B cell (primary cell): ENCODE measurements at regions of chr16 and their contacts with region 1.

Region 1: GRCh38 chr16:57530104-57530521 is 6.3 kb downstream of the CCDC102A start:
- DNase-seq: peak; percentile 75
- ATAC-seq: peak; percentile 72
- H3K4me3 ChIP-seq: peak overlapping the region in 4 of 5 experiments; percentile 4 to 20 (median 10)
- H3K4me3 Mint-ChIP-seq: peak overlapping the region; percentile 86
- H3K27ac ChIP-seq: peak overlapping the region; percentile 73 to 83
- H3K27ac Mint-ChIP-seq: peak overlapping the region; percentile 97
- H3K4me1 ChIP-seq: peaks cover 61 to 66% of the 10 kb centered on the region in 2 donors
- H3K4me1 Mint-ChIP-seq: peaks cover 68% of the 10 kb centered on the region
- H3K27me3 ChIP-seq: no peaks in the 10 kb centered on the region
- H3K27me3 Mint-ChIP-seq: no peaks in the 10 kb centered on the region
- CTCF ChIP-seq: no peak

Region 2: GRCh38 chr16:56115817-56116576 is 1414.1 kb before region 1 on chr16:
- CTCF ChIA-PET with region 1: no interaction called
- POLR2A ChIA-PET with region 1: no interaction called
- intact Hi-C with region 1: no loop called
- DNase-seq: no peak
- ATAC-seq: no peak
- H3K4me3 ChIP-seq: no peak overlapping the region
- H3K4me3 Mint-ChIP-seq: no peak overlapping the region
- H3K27ac ChIP-seq: no peak overlapping the region
- H3K27ac Mint-ChIP-seq: no peak overlapping the region
- H3K4me1 ChIP-seq: peaks cover 3 to 7% of the 10 kb centered on the region in 2 donors
- H3K4me1 Mint-ChIP-seq: peaks cover 11% of the 10 kb centered on the region
- H3K27me3 ChIP-seq: peaks cover 0 to 3% (median 0%) of the 10 kb centered on the region in 4 experiments
- H3K27me3 Mint-ChIP-seq: peaks cover 6% of the 10 kb centered on the region
- CTCF ChIP-seq: no peak

Region 3: DNA sequence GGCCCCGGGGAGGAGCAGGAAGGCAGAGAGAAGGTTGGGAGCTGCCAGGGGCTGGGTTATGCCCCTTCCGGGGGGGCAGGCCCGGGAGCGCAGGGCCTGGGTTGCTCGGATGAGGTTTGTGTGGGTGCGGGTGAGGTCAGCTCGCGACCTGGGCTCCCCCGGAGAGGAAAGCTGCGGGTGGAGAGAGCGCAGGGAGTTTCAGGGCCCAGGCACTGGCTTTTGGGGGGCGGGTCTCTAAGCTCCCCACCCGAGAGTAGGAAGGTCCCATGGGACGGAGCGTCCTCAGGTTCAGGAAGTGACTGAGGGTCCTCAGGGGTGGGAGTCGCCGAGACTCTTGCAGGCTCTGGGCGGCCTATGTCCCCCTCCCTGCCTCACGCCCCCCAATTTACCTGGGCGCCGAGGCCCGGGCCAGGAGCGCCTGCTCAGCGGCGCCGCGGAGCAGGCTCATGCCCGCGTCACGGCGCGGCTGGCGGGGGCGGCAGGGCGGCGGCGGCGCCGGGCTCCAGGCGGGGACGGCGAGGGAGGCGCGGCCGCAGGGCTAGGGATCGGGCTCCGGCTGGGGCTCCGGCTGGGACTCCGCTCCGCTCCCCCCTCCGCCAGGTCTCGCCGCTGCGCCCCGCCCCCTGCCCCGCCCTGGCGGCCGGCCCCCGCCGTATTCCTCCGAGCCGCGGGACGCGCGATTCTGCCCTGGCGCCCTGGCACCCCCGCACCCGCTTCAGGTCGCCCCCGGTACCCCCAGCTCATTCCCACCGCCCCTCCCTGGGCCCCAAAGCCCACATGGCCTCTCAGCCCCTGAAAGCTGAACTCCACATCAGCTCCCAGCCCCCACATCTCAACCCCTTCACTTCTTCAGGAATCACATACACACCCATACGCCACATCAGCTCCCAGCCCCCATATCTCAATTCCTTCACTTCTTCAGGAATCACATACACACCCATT is 43.9 kb before region 1 on chr16 and contains the start of gene DOK4:
- CTCF ChIA-PET with region 1: no interaction called
- POLR2A ChIA-PET with region 1: no interaction called
- intact Hi-C with region 1: no loop called
- DNase-seq: peak; percentile 77
- ATAC-seq: peak; percentile 93
- H3K4me3 ChIP-seq: peak within 1 kb of the TSS; percentile 22 to 68 (median 56)
- H3K4me3 Mint-ChIP-seq: peak within 1 kb of the TSS; percentile 85
- H3K27ac ChIP-seq: no peak within 1 kb of the TSS
- H3K27ac Mint-ChIP-seq: no peak within 1 kb of the TSS
- H3K4me1 ChIP-seq: peaks cover 11 to 15% of the 10 kb centered on the region in 2 donors
- H3K4me1 Mint-ChIP-seq: peaks cover 16% of the 10 kb centered on the region
- H3K27me3 ChIP-seq: peaks cover 0 to 12% (median 3%) of the 10 kb centered on the region in 4 experiments
- H3K27me3 Mint-ChIP-seq: peaks cover 6% of the 10 kb centered on the region
- CTCF ChIP-seq: no peak
- total RNA-seq, gene DOK4: 0.73 and 1.6 TPM in 2 replicates

Region 4: DNA sequence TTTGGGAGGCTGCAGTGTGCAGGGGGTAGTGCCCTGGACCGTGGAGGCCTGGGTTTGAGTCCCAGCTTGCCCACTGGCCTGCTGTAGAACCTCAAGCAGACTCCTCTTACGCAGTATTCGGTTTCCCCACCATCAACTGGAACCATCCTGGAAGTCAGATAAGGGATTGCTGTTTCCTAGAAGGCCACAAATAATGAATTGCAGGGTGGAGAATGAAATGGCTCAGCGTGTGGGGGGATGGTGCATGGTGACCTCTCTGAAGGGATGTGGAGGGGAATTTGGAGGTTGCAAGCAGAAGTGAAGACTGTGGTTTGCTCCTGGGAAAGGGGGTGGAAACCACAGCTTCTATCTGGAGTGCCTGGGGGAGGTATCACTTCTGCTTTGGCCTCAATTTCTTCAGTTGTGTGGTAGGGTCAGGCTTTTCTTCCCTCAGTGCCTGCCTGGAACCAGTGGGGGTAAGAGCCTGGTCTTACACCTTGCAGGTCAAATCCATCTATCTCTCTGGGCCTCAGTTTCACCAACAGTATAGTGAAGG is 14.1 kb after region 1 on chr16:
- CTCF ChIA-PET with region 1: interaction called, 6 read pairs
- POLR2A ChIA-PET with region 1: interaction called, 8 read pairs
- intact Hi-C with region 1: loop called (anchors 1 kb)
- DNase-seq: peak; percentile 91
- ATAC-seq: peak; percentile 77
- H3K4me3 ChIP-seq: peak overlapping the region; percentile 59 to 92 (median 84)
- H3K4me3 Mint-ChIP-seq: peak overlapping the region; percentile 76
- H3K27ac ChIP-seq: peak overlapping the region; percentile 5 to 72
- H3K27ac Mint-ChIP-seq: peak overlapping the region; percentile 93
- H3K4me1 ChIP-seq: peaks cover 73 to 83% of the 10 kb centered on the region in 2 donors
- H3K4me1 Mint-ChIP-seq: peaks cover 76% of the 10 kb centered on the region
- H3K27me3 ChIP-seq: no peaks in the 10 kb centered on the region
- H3K27me3 Mint-ChIP-seq: no peaks in the 10 kb centered on the region
- CTCF ChIP-seq: no peak